BJ (cell line): ENCODE measurements at regions of chr12 and their contacts with region 1.

Region 1: GRCh38 chr12:56359851-56360767 is at the start of gene STAT2:
- DNase-seq: peak; percentile 100
- H3K4me3 ChIP-seq: peak within 1 kb of the TSS; percentile 67
- H3K27me3 ChIP-seq: no peaks in the 10 kb centered on the region
- CTCF ChIP-seq: no peak
- polyA plus RNA-seq, gene STAT2: 154 TPM in 2 replicates

Region 2: GRCh38 chr12:56326533-56326932 is 33.6 kb before region 1 on chr12:
- CTCF ChIA-PET with region 1: no interaction called
- POLR2A ChIA-PET with region 1: no interaction called
- DNase-seq: no peak
- H3K4me3 ChIP-seq: no peak overlapping the region
- H3K27me3 ChIP-seq: no peaks in the 10 kb centered on the region
- CTCF ChIP-seq: no peak

Region 3: GRCh38 chr12:56346703-56347102 is 13.4 kb before region 1 on chr12:
- CTCF ChIA-PET with region 1: interaction called, 10 read pairs
- POLR2A ChIA-PET with region 1: no interaction called
- DNase-seq: no peak
- H3K4me3 ChIP-seq: no peak overlapping the region
- H3K27me3 ChIP-seq: no peaks in the 10 kb centered on the region
- CTCF ChIP-seq: no peak

Region 4: GRCh38 chr12:56461235-56462159 is 101.4 kb after region 1 on chr12:
- CTCF ChIA-PET with region 1: interaction called, 22 read pairs
- POLR2A ChIA-PET with region 1: interaction called, 3 read pairs
- DNase-seq: no peak
- H3K4me3 ChIP-seq: no peak overlapping the region
- H3K27me3 ChIP-seq: no peaks in the 10 kb centered on the region
- CTCF ChIP-seq: no peak